Activated CD4-positive, alpha-beta T cell treated with anti-CD3 and anti-CD28 coated beads, Interleukin-2, amount 10 ng/mL, durations not matched to agents 24 days and 14 days (primary cell): ENCODE measurements at regions of chr5 and their contacts with region 1.

Region 1: GRCh38 chr5:181005791-181006190 is 17.1 kb downstream of the BTNL3 start:
- DNase-seq: no peak
- H3K4me3 Mint-ChIP-seq: no peak overlapping the region
- H3K27ac Mint-ChIP-seq: no peak overlapping the region
- H3K4me1 Mint-ChIP-seq: no peaks in the 10 kb centered on the region
- H3K27me3 Mint-ChIP-seq: no peaks in the 10 kb centered on the region

Region 2: GRCh38 chr5:179427032-179427675 is 1578.6 kb before region 1 on chr5:
- intact Hi-C with region 1: no loop called
- DNase-seq: no peak
- H3K4me3 Mint-ChIP-seq: no peak overlapping the region
- H3K27ac Mint-ChIP-seq: no peak overlapping the region
- H3K4me1 Mint-ChIP-seq: no peaks in the 10 kb centered on the region
- H3K27me3 Mint-ChIP-seq: peaks cover 2% of the 10 kb centered on the region

Region 3: GRCh38 chr5:180950291-180950949 is 55.4 kb before region 1 on chr5:
- intact Hi-C with region 1: loop called (anchors 1 kb)
- DNase-seq: no peak
- H3K4me3 Mint-ChIP-seq: no peak overlapping the region
- H3K27ac Mint-ChIP-seq: no peak overlapping the region
- H3K4me1 Mint-ChIP-seq: peaks cover 2% of the 10 kb centered on the region
- H3K27me3 Mint-ChIP-seq: no peaks in the 10 kb centered on the region